Caco-2 (cell line): ENCODE measurements at regions of chr4 and their contacts with region 1.

Region 1: DNA sequence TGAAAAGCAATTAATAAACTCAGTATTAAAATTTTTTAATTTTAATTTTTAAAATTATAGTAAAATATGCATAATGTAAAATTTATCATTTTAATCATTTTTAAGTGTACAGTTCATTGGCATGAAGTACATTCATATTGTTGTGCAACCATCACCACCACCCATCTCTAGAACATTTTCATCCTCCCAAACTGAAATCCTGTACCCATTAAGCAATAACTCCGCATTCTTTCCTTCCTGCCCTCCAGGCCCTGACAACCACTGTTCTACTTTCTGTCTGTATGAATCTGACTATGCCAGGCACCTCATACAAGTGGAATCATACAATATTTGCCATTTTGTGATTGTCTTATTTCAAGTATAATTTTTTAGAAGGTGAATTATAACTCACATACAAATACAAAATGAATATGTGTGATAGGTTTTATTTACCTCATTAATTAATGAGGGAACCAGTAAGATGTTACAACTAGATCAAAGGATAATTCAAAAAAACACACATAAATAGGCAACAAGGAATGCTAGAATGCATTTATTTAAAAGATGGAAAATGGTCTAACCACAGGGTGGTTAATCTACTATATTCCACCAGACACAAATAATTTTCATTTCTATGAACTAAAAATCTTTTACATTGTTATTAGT is 13.1 kb upstream of the AFF1 start:
- DNase-seq: no peak
- H3K4me3 ChIP-seq: no peak overlapping the region
- H3K4me3 Mint-ChIP-seq: no peak overlapping the region
- H3K27ac Mint-ChIP-seq: no peak overlapping the region
- H3K4me1 ChIP-seq: peaks cover 18% of the 10 kb centered on the region
- H3K4me1 Mint-ChIP-seq: peaks cover 15% of the 10 kb centered on the region
- H3K27me3 ChIP-seq: no peaks in the 10 kb centered on the region
- H3K27me3 Mint-ChIP-seq: no peaks in the 10 kb centered on the region
- CTCF ChIP-seq: no peak

Region 2: DNA sequence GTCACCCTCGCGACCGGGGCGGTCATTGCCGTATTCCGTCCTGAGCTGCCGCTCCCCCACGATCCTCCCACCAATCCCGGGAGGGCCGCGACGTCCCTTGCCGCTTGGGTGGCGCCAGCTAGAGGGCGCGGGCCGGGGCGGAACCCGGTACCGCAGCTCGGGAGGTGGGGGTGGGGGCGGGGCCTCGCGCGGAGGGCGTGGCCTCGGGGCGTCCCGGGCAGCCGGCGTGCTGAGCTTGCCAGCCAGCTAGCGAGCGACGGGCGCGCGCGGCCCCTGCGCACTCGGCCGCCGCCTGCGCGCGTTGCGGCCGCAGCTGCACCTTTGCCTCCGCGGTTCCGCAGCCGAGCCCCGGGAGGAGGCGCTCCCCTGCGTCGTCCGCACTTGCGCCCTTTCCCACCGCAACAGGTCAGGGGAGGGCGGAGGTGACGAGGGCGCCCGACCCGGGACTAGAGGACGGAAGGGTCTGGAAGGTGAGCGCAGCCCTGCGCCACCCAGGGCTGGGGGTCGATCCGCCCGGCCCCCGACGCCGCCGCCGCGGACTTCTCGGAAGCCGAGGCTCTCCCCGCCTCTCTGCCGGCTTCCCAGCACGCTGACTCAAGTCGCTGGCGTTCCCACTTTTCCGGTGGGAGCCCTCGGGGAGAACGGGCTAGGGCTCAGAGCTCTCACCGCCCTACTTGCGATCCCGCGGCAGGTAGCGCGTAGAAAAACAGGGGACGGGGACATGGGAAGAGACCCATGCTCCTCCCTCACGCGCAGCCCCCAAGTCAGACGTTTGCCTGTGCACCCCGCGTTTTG is 13.2 kb after region 1 on chr4 and contains the start of gene AFF1:
- CTCF ChIA-PET with region 1: interaction called, 30 read pairs
- POLR2A ChIA-PET with region 1: interaction called, 11 read pairs
- intact Hi-C with region 1: loop called (anchors 1 kb)
- DNase-seq: peak; percentile 93 to 95
- H3K4me3 ChIP-seq: peak within 1 kb of the TSS; percentile 84
- H3K4me3 Mint-ChIP-seq: peak within 1 kb of the TSS; percentile 91
- H3K27ac Mint-ChIP-seq: peak within 1 kb of the TSS; percentile 89
- H3K4me1 ChIP-seq: peaks cover 22% of the 10 kb centered on the region
- H3K4me1 Mint-ChIP-seq: peaks cover 20% of the 10 kb centered on the region
- H3K27me3 ChIP-seq: no peaks in the 10 kb centered on the region
- H3K27me3 Mint-ChIP-seq: no peaks in the 10 kb centered on the region
- CTCF ChIP-seq: peak in 1 of 2 experiments; percentile 44
- total RNA-seq, gene AFF1: 45.2 and 48.3 TPM in 2 replicates

Region 3: DNA sequence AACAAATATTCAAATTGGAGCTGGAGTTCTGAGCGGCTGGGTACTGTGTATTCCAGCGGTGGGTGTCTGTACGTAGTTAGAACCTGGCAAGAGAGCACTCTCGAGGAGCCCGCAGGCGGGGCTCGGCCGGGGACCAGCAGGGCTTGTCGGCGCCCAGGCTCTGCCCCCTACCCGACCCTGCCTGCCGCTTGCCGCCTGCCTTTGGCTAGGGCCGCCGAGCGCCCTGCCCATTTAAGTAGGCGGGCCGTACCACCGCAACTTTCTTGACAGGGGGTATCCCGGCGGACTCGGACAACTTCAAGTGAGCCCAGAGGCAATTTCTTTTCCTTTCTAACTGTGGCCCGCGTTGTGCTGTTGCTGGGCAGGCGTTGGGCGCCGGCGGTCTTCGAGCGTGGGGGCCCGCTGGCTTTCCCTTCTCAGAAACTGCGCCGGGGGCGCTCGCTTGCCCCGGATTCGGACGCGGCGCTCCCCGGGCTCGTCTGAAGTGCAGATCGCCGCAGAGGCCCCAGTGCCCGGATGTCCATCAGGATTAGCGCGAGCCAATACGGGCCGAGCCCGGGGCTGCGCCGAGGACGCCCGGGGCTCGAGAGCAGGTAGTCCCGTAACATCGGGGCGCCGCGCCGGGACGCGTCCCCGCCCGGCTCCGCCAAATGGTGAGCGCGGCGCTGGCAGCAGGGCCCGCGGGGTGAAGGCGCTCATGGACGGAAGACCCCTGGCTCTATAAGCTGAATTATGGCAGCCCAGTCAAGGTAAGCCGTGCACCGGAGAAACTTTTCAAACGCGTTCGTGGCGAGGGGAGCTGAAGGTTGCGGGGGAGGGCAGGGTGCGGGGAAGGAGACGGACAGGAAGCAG is 85.2 kb after region 1 on chr4:
- CTCF ChIA-PET with region 1: interaction called, 9 read pairs
- POLR2A ChIA-PET with region 1: interaction called, 7 read pairs
- intact Hi-C with region 1: loop called (anchors 1 kb)
- DNase-seq: peak; percentile 95
- H3K4me3 ChIP-seq: peak overlapping the region; percentile 94
- H3K4me3 Mint-ChIP-seq: peak overlapping the region; percentile 97
- H3K27ac Mint-ChIP-seq: peak overlapping the region; percentile 93
- H3K4me1 ChIP-seq: peaks cover 41% of the 10 kb centered on the region
- H3K4me1 Mint-ChIP-seq: peaks cover 8% of the 10 kb centered on the region
- H3K27me3 ChIP-seq: no peaks in the 10 kb centered on the region
- H3K27me3 Mint-ChIP-seq: no peaks in the 10 kb centered on the region
- CTCF ChIP-seq: peak in 1 of 2 experiments; percentile 30

Region 4: DNA sequence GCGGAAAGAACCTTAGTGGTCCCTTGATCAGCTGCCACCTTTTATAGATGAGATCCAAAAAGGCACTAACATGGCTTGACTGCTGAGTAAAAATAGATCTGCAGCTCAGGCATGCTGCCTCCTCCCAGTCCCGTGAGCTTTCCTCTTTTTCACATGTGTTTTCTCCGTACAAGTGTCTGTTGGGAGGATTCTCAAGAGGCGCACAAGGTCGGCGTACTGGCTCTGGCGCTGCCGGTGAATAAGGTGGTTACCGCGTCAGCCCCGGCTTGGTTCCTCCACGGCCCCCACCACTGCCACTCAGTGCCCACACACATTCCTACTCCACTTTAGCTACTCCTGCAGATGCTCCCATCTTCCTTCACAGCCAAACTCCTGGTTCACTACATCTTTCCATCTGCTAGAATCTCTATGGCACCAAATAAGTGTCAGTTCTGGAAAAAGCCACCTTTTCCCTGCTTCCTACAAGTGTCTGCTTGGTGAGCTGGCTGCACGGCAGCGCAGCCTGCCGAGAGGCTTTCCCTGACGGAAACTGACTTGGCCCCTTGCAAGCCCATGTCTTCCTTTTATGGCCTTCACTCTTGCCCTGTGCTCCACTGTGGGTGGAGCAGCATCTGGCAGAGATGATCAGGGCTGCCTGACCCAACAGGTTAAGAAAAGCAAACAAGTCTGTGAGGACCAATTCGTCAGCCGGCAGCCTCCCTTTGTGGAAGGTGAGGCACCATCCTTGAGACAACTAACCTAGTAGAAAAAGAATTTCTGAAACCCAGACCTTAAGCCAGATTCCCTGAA is 198.9 kb after region 1 on chr4:
- CTCF ChIA-PET with region 1: interaction called, 5 read pairs
- POLR2A ChIA-PET with region 1: no interaction called
- intact Hi-C with region 1: loop called (anchors 1 kb)
- DNase-seq: peak; percentile 51 to 63
- H3K4me3 ChIP-seq: no peak overlapping the region
- H3K4me3 Mint-ChIP-seq: peak overlapping the region; percentile 44
- H3K27ac Mint-ChIP-seq: peak overlapping the region; percentile 71
- H3K4me1 ChIP-seq: peaks cover 53% of the 10 kb centered on the region
- H3K4me1 Mint-ChIP-seq: peaks cover 27% of the 10 kb centered on the region
- H3K27me3 ChIP-seq: no peaks in the 10 kb centered on the region
- H3K27me3 Mint-ChIP-seq: no peaks in the 10 kb centered on the region
- CTCF ChIP-seq: no peak

Region 5: DNA sequence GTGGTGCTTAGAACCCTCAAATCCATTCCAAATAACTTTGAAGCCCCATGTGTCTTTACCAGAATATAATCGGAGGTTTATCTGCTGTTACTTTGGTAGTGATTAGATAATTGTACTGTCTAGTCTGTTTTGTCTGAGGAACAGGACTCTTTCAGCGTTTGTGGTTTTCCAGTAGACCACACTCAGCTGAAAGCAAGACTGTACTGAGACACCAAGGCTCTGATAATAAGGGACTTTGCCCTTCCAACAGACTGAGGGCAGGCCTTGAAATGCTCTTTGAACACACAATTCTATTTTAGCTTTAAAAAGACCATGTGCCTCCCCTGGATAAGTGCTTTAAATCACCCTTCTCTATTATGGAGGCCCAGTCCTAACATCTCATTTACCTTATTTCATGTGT is 222.6 kb after region 1 on chr4:
- CTCF ChIA-PET with region 1: no interaction called
- POLR2A ChIA-PET with region 1: no interaction called
- intact Hi-C with region 1: loop called (anchors 1 kb)
- DNase-seq: no peak
- H3K4me3 ChIP-seq: no peak overlapping the region
- H3K4me3 Mint-ChIP-seq: no peak overlapping the region
- H3K27ac Mint-ChIP-seq: no peak overlapping the region
- H3K4me1 ChIP-seq: no peaks in the 10 kb centered on the region
- H3K4me1 Mint-ChIP-seq: peaks cover 12% of the 10 kb centered on the region
- H3K27me3 ChIP-seq: no peaks in the 10 kb centered on the region
- H3K27me3 Mint-ChIP-seq: no peaks in the 10 kb centered on the region
- CTCF ChIP-seq: no peak

Region 6: GRCh38 chr4:87150498-87151261 is 228.9 kb after region 1 on chr4:
- CTCF ChIA-PET with region 1: interaction called, 9 read pairs
- POLR2A ChIA-PET with region 1: no interaction called
- intact Hi-C with region 1: loop called (anchors 2 kb)
- DNase-seq: peak; percentile 42 to 75
- H3K4me3 ChIP-seq: no peak overlapping the region
- H3K4me3 Mint-ChIP-seq: peak overlapping the region; percentile 19
- H3K27ac Mint-ChIP-seq: peak overlapping the region; percentile 21
- H3K4me1 ChIP-seq: peaks cover 8% of the 10 kb centered on the region
- H3K4me1 Mint-ChIP-seq: peaks cover 31% of the 10 kb centered on the region
- H3K27me3 ChIP-seq: no peaks in the 10 kb centered on the region
- H3K27me3 Mint-ChIP-seq: no peaks in the 10 kb centered on the region
- CTCF ChIP-seq: peak; percentile 78 to 88

Region 7: GRCh38 chr4:87235020-87235671 is 313.4 kb after region 1 on chr4:
- CTCF ChIA-PET with region 1: no interaction called
- POLR2A ChIA-PET with region 1: no interaction called
- intact Hi-C with region 1: loop called (anchors 1 kb)
- DNase-seq: no peak
- H3K4me3 ChIP-seq: peak overlapping the region; percentile 40
- H3K4me3 Mint-ChIP-seq: peak overlapping the region; percentile 70
- H3K27ac Mint-ChIP-seq: peak overlapping the region; percentile 22
- H3K4me1 ChIP-seq: peaks cover 10% of the 10 kb centered on the region; the same call in 1 of the 2 replicates
- H3K4me1 Mint-ChIP-seq: peaks cover 17% of the 10 kb centered on the region
- H3K27me3 ChIP-seq: no peaks in the 10 kb centered on the region
- H3K27me3 Mint-ChIP-seq: no peaks in the 10 kb centered on the region
- CTCF ChIP-seq: no peak